ENCODE measurements at regions of chr6 and their contacts with region 1.

Region 1: GRCh38 chr6:158853072-158853871 is 34.1 kb upstream of the EZR start:
- DNase-seq: peak; percentile 75 to 95 (median 93)
- H3K4me3 ChIP-seq: peak overlapping the region in 2 of 7 experiments; percentile 28 to 37
- H3K27ac ChIP-seq: peak overlapping the region in 1 of 2 experiments; percentile 82
- H3K4me1 ChIP-seq: peaks cover 15 to 39% (median 26%) of the 10 kb centered on the region in 4 experiments
- H3K27me3 ChIP-seq: no peaks in the 10 kb centered on the region

Region 2: GRCh38 chr6:158548418-158549161 is 304.7 kb before region 1 on chr6:
- CTCF ChIA-PET with region 1: no interaction called
- POLR2A ChIA-PET with region 1: no interaction called
- DNase-seq: no peak
- H3K4me3 ChIP-seq: no peak overlapping the region
- H3K27ac ChIP-seq: no peak overlapping the region
- H3K4me1 ChIP-seq: no peaks in the 10 kb centered on the region
- H3K27me3 ChIP-seq: peaks cover 0 to 3% (median 0%) of the 10 kb centered on the region in 5 experiments

Region 3: DNA sequence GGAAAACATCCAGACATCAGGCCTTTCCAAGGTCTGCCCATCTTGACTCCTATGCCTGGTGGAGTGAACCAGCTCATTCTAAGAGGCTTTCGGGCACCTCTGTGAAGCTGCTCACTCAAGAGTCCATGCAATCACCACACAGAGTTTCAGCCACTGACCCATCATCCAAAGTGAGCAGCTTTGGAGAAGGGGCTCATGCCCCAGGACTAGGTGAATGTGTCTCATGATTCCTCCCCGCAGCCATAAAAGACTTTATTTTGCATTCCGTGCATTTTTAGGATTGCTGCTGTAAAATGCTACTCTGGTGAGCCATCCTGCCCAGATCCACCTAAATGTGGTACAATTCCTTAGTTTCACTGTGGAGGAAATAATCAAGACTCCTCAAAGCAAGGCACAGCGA is 10.4 kb after region 1 on chr6:
- CTCF ChIA-PET with region 1: interaction called, 12 read pairs
- POLR2A ChIA-PET with region 1: interaction called, 3 read pairs
- DNase-seq: no peak
- H3K4me3 ChIP-seq: no peak overlapping the region
- H3K27ac ChIP-seq: no peak overlapping the region
- H3K4me1 ChIP-seq: peaks cover 0 to under 1% (median under 1%) of the 10 kb centered on the region in 4 experiments
- H3K27me3 ChIP-seq: peaks cover 0 to 3% (median 0%) of the 10 kb centered on the region in 5 experiments

Region 4: DNA sequence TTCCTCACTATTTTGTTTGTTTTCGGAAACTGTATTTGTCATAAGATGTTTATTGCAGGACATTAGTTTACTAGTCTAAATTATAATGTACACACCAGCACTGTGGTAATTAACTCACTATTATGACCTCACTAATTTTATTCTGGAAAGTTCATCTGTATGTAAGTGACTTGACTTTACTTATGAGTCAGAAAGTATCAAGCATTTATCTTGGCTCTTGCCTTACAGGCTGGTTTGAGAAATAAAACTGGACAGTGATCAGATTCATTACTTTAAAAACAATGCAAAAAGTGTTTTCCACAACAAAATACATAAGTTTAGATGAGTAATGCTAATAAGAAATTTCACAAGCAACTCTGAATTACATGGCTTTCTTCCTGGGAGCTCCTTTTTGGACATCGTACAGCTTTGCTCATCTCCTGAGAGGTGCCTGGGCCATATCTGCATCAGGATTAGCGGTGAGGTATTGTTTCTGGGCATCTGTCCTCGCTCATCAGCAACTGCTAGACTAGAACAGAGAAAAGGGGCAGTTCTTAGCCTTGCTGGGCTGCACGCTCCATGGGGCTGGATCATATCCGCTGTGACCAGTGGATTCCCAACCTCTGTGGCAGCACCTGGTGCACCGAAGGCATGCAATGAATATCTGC is 659.9 kb after region 1 on chr6:
- CTCF ChIA-PET with region 1: no interaction called
- POLR2A ChIA-PET with region 1: no interaction called
- DNase-seq: no peak
- H3K4me3 ChIP-seq: no peak overlapping the region
- H3K27ac ChIP-seq: no peak overlapping the region
- H3K4me1 ChIP-seq: no peaks in the 10 kb centered on the region
- H3K27me3 ChIP-seq: peaks cover 0 to 2% (median 0%) of the 10 kb centered on the region in 5 experiments